Activated CD4-positive, alpha-beta memory T cell treated with anti-CD3 and anti-CD28 coated beads, Interleukin-2, amount 10 ng/mL, durations not matched to agents 7 days and 5 days (primary cell): ENCODE measurements at regions of chr2 and their contacts with region 1.

Region 1: GRCh38 chr2:195533771-195534642 is 123.0 kb upstream of the SLC39A10 start:
- DNase-seq: peak; percentile 77
- H3K4me3 Mint-ChIP-seq: peak overlapping the region; percentile 80
- H3K27ac Mint-ChIP-seq: peak overlapping the region; percentile 95
- H3K4me1 Mint-ChIP-seq: peaks cover 80% of the 10 kb centered on the region
- H3K27me3 Mint-ChIP-seq: no peaks in the 10 kb centered on the region

Region 2: DNA sequence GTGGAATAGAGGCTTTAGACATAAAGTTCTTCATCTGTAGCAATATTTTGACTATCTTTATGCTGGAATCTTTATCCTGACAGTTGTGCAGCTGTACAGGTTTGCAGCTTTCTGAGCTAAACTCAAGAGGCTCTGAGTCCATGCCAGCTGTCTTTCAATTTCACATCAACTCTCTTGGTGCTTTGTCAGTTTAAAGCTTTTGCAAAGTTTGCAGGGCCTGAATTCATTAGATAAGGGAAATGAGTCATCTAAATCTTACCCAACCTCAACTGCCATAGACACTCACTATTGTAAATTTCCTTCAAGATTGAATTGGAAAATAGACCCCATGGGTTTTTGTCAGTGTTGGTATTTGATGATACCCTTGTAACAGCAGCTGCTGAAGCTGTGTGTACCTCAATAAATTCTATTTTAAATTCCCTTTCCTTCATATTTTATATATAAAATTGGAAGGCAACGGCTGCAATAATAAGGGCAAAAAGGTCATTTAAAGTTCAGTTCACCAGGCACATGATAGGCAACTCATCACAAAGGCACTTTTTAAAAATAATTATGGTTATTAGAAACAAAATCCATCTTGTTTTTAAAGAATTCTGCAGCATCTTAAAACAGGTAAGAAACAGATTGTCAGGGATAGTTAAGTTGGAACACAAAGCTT is 46.9 kb before region 1 on chr2:
- CTCF ChIA-PET with region 1: interaction called, 8 read pairs
- POLR2A ChIA-PET with region 1: interaction called, 35 read pairs
- DNase-seq: peak; percentile 30
- H3K4me3 Mint-ChIP-seq: peak overlapping the region; percentile 38
- H3K27ac Mint-ChIP-seq: peak overlapping the region; percentile 84
- H3K4me1 Mint-ChIP-seq: peaks cover 35% of the 10 kb centered on the region
- H3K27me3 Mint-ChIP-seq: no peaks in the 10 kb centered on the region

Region 3: DNA sequence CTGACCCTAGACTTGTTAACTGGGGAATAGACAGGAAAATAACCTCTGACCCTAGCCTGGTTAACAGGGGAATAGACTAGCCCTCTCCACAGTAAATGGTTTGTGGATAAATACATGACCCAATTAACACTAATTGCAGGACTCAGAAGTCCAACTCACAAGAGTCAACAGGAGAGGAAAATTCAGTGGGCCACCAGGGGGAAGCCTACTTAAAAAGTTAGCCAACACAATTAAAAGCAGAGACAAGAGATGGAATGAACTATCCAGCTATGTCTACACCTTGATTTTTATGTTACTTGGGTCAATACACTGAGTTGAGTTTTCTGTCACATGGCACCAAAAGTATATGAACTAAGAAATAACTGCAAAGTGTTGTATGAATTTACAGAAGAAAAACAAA is 35.8 kb before region 1 on chr2:
- CTCF ChIA-PET with region 1: interaction called, 3 read pairs
- POLR2A ChIA-PET with region 1: interaction called, 10 read pairs
- DNase-seq: peak; percentile 55
- H3K4me3 Mint-ChIP-seq: no peak overlapping the region
- H3K27ac Mint-ChIP-seq: no peak overlapping the region
- H3K4me1 Mint-ChIP-seq: peaks cover 25% of the 10 kb centered on the region
- H3K27me3 Mint-ChIP-seq: no peaks in the 10 kb centered on the region

Region 4: GRCh38 chr2:195543902-195544894 is 10.2 kb after region 1 on chr2:
- CTCF ChIA-PET with region 1: interaction called, 25 read pairs
- POLR2A ChIA-PET with region 1: interaction called, 155 read pairs
- DNase-seq: no peak
- H3K4me3 Mint-ChIP-seq: peak overlapping the region; percentile 6
- H3K27ac Mint-ChIP-seq: peak overlapping the region; percentile 87
- H3K4me1 Mint-ChIP-seq: peaks cover 75% of the 10 kb centered on the region
- H3K27me3 Mint-ChIP-seq: no peaks in the 10 kb centered on the region

Region 5: GRCh38 chr2:195559431-195559914 is 25.5 kb after region 1 on chr2:
- CTCF ChIA-PET with region 1: interaction called, 81 read pairs
- POLR2A ChIA-PET with region 1: interaction called, 824 read pairs
- DNase-seq: peak; percentile 91
- H3K4me3 Mint-ChIP-seq: peak overlapping the region; percentile 74
- H3K27ac Mint-ChIP-seq: peak overlapping the region; percentile 99
- H3K4me1 Mint-ChIP-seq: peaks cover 71% of the 10 kb centered on the region
- H3K27me3 Mint-ChIP-seq: no peaks in the 10 kb centered on the region

Region 6: DNA sequence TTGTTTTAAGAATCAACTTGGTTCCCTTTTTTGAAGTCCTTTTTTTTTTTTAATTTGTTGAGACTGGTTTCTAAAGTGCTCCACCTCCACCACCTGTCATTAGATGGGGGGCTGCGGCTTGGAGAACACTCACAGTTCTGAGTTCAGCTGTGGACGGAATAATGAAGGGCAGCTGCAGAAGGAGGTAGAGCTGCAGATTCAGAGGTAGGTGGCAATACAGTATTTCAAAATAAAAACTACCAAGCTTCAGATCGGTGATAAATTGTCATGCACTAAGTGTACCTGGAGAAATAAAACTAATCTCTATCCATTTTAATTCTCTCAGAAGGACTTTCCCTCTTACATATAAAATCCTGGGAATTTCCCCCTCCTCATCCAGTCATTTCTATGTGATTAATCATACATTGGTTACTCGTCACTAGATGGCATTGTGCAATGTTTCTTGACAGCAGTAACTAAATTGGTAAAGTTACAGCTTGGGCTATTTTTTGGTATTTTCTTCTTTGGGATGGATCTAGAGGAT is 41.9 kb after region 1 on chr2:
- CTCF ChIA-PET with region 1: interaction called, 4 read pairs
- POLR2A ChIA-PET with region 1: interaction called, 20 read pairs
- DNase-seq: no peak
- H3K4me3 Mint-ChIP-seq: no peak overlapping the region
- H3K27ac Mint-ChIP-seq: no peak overlapping the region
- H3K4me1 Mint-ChIP-seq: peaks cover 41% of the 10 kb centered on the region
- H3K27me3 Mint-ChIP-seq: no peaks in the 10 kb centered on the region